Sciatic nerve (tissue), 2 donors: ENCODE measurements at regions of chr11 and their contacts with region 1.

Region 1: DNA sequence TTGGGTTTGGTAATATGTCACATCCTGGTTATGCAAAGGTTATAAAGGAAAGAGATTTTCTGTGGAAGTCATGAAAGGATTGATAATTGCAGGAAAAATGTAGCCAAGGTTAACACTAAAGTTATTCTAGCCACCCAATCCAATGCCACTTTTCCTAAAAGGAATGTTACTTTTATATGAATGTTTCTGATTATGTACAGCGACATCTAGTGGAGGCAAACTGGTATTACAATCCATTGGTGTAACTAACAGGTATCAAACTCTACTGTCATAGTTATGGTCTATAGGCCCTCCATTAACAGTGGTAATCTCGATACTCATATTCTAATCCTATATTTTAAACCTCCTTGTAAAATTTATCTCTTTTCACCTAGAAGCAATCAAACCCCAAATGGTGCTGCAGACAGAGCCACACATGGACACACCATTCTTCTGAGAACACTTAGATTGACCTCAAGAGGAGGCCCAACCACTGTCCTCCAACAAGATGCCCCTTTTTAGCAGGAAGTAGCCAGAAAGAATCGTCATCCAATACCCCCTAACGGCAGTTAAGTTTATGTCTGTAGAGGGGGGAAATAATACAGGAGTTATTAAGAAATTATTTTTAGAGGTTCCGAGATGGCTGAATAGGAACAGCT is 74.9 kb upstream of the RAG2 start:
- DNase-seq: no peak
- ATAC-seq: no peak

Region 2: GRCh38 chr11:35030716-35031213 is 1642.2 kb before region 1 on chr11:
- intact Hi-C with region 1: no loop called
- DNase-seq: no peak
- ATAC-seq: peak; percentile 62

Region 3: DNA sequence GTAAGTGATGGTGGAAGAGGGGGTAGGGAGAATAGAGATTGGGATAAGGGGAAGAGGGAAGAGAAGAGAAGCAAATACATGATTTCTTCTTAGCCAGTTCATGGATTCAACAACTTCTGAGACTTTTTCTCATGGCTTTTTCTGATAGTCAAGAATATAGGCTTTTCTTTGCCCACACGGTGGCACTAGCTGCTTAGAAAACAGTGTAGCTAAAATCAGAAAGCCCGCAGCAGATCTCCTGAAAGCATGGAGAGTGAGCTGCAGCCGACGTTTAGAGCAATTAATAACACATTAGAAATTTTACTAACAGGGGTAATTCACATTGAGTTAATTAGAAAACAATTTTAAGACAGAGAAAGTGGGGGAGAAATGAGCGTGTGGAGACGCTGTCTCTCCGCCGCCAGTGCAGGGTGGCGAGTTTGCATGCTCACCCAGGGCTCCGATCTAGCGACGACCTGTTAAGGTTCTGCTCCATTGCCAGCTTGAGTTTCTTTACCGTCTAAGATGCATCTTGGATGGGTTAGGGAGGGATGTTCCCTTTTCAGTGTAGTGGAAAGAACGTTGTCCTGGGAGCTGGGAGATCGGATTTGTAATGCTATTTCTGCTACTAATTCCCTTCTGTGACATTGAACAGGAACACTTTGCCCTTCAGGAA is 108.4 kb before region 1 on chr11:
- intact Hi-C with region 1: loop called (anchors 5 kb)
- DNase-seq: peak; percentile 63
- ATAC-seq: peak; percentile 73